ENCODE measurements at regions of chr11 and their contacts with region 1.

Region 1: GRCh38 chr11:62787005-62787759 is at the start of gene TMEM179B:
- DNase-seq: peak; percentile 87 to 98 (median 95)
- ATAC-seq: peak; percentile 83
- H3K4me3 ChIP-seq: peak within 1 kb of the TSS; percentile 82
- H3K4me3 Mint-ChIP-seq: peak within 1 kb of the TSS; percentile 93 to 97 (median 96)
- H3K27ac ChIP-seq: peak within 1 kb of the TSS; percentile 93
- H3K27ac Mint-ChIP-seq: peak within 1 kb of the TSS; percentile 91 to 99 (median 96)
- H3K4me1 ChIP-seq: peaks cover 32 to 38% of the 10 kb centered on the region in 2 donors
- H3K4me1 Mint-ChIP-seq: peaks cover 22 to 59% (median 42%) of the 10 kb centered on the region in 7 donors
- H3K27me3 ChIP-seq: no peaks in the 10 kb centered on the region
- H3K27me3 Mint-ChIP-seq: no peaks in the 10 kb centered on the region
- total RNA-seq, gene TMEM179B: 23.2 to 72.3 (median 50.9) TPM

Region 2: GRCh38 chr11:62186195-62186594 is 601.0 kb before region 1 on chr11:
- CTCF ChIA-PET with region 1: no interaction called
- POLR2A ChIA-PET with region 1: no interaction called
- intact Hi-C with region 1: no loop called
- DNase-seq: no peak
- ATAC-seq: no peak
- H3K4me3 ChIP-seq: no peak overlapping the region
- H3K4me3 Mint-ChIP-seq: no peak overlapping the region
- H3K27ac ChIP-seq: no peak overlapping the region
- H3K27ac Mint-ChIP-seq: no peak overlapping the region
- H3K4me1 ChIP-seq: no peaks in the 10 kb centered on the region
- H3K4me1 Mint-ChIP-seq: no peaks in the 10 kb centered on the region
- H3K27me3 ChIP-seq: no peaks in the 10 kb centered on the region
- H3K27me3 Mint-ChIP-seq: peaks cover 33 to 40% (median 33%) of the 10 kb centered on the region in 5 donors

Region 3: DNA sequence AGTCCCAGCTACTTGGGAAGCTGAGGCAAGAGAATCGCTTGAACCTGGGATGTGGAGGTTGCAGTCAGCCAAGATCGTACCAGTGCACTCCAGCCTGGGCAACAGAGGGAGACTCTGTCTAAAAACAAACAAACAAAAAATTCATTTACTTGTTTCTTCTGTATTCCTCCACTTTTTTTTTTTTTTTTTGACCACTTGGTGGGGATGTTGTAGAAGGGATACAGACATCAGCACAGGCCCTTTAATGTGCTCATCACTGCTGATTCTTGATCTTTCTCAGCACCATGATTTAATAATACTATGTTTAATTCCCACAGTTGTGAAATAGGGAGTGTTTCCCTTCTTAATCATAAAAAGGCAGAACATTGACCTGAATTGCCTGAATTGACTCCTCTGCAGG is 54.4 kb before region 1 on chr11:
- CTCF ChIA-PET with region 1: interaction called, 17 read pairs
- POLR2A ChIA-PET with region 1: interaction called, 41 read pairs
- intact Hi-C with region 1: loop called (anchors 1 kb)
- DNase-seq: peak in 2 of 9 donors; percentile 33 to 40
- ATAC-seq: no peak
- H3K4me3 ChIP-seq: no peak overlapping the region
- H3K4me3 Mint-ChIP-seq: peak overlapping the region in 3 of 10 donors; percentile 23 to 37 (median 29)
- H3K27ac ChIP-seq: no peak overlapping the region
- H3K27ac Mint-ChIP-seq: peak overlapping the region in 4 of 9 donors; percentile 39 to 60 (median 46)
- H3K4me1 ChIP-seq: peaks cover 11 to 26% of the 10 kb centered on the region in 2 donors
- H3K4me1 Mint-ChIP-seq: peaks cover 0 to 32% (median 27%) of the 10 kb centered on the region in 7 donors
- H3K27me3 ChIP-seq: no peaks in the 10 kb centered on the region
- H3K27me3 Mint-ChIP-seq: no peaks in the 10 kb centered on the region

Region 4: DNA sequence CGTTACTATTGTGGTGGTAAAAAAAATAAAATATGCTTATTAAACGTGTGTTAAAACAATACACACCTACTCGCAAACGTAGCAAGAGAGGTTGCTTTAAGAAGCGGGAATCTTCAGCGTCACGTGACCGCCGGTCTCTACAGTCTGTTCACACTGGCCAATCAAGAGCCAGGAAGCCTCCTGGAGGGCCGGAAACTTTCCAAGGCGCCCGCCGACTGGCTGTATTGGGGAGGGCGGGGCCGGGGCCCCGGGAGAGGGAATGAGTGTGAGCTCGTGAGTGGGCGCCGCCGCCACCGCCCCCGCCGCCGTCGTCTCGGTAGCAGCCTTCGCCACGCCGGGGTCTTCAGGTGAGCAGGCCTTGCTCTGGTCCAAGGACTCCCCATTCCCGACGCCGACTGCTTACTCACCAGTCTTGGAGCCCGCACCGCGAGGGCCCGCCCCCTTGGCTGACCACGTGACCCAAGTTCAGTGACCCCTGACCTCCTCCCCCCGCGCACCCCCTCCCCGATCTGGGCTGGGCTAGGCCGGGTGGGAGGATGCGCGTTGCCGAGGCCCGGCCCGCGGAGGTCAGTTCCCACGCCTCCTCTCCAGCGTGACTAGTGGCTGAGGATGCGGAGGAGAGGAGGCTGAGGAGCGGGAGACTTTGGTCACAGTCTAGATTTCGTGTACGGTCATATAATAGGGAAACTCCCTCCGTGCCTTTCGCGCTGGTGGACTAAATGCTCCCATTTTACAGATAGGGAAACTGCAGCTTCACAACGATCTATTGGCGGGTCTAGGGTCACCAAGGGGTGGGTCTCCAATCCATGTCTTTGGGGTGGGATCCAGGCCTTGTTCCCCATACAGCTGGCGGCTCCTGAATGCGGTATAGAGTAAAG is 15.8 kb before region 1 on chr11 and contains the start of gene TAF6L:
- CTCF ChIA-PET with region 1: interaction called, 10 read pairs
- POLR2A ChIA-PET with region 1: interaction called, 43 read pairs
- intact Hi-C with region 1: loop called (anchors 1 kb)
- DNase-seq: peak; percentile 80 to 98 (median 82)
- ATAC-seq: peak; percentile 92
- H3K4me3 ChIP-seq: peak within 1 kb of the TSS; percentile 66
- H3K4me3 Mint-ChIP-seq: peak within 1 kb of the TSS; percentile 88 to 98 (median 94)
- H3K27ac ChIP-seq: peak within 1 kb of the TSS; percentile 82
- H3K27ac Mint-ChIP-seq: peak within 1 kb of the TSS; percentile 89 to 97 (median 94)
- H3K4me1 ChIP-seq: peaks cover 10 to 13% of the 10 kb centered on the region in 2 donors
- H3K4me1 Mint-ChIP-seq: peaks cover 17 to 37% (median 27%) of the 10 kb centered on the region in 7 donors
- H3K27me3 ChIP-seq: no peaks in the 10 kb centered on the region
- H3K27me3 Mint-ChIP-seq: no peaks in the 10 kb centered on the region
- total RNA-seq, gene TAF6L: 13.1 to 34.9 (median 24.1) TPM

Region 5: GRCh38 chr11:62816557-62816956 is 29.4 kb after region 1 on chr11:
- CTCF ChIA-PET with region 1: interaction called, 5 read pairs
- POLR2A ChIA-PET with region 1: interaction called, 10 read pairs
- intact Hi-C with region 1: no loop called
- DNase-seq: no peak
- ATAC-seq: peak; percentile 77
- H3K4me3 ChIP-seq: no peak overlapping the region
- H3K4me3 Mint-ChIP-seq: no peak overlapping the region
- H3K27ac ChIP-seq: no peak overlapping the region
- H3K27ac Mint-ChIP-seq: peak overlapping the region in 1 of 9 donors; percentile 8
- H3K4me1 ChIP-seq: no peaks in the 10 kb centered on the region
- H3K4me1 Mint-ChIP-seq: peaks cover 0 to 9% (median 0%) of the 10 kb centered on the region in 7 donors
- H3K27me3 ChIP-seq: no peaks in the 10 kb centered on the region
- H3K27me3 Mint-ChIP-seq: no peaks in the 10 kb centered on the region

Region 6: DNA sequence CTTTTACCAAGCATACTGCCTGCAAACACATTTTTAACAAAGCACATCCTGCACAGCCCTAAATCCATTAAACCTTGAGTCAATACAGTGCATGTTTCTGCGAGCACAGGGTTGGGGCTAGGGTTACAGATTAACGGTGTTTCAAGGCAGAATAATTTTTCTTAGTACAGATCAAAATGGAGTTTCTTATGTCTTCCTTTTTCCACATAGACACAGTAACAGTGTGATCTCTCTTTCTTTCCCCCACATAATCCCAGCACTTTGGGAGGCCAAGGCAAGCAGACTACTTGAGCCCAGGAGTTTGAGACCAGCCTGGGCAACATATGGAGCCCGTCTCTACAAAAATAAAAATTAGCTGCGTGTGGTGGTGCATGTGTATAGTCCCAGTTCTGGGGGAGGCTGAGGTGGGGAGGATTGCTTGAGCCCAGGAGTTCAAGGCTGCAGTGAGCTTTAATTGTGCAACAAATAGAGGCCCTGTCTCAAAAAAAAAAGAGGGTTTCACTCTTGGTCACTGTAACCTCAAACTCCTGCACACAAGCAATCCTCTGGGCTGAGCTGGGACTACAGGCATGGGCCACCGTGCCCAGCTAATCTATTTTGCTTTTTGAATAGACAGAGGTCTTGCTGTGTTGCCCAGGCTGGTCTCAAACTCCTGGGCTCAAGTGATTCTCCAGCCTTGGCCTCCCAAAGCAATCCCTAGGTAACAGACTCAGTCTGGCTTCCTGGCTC is 73.8 kb after region 1 on chr11:
- CTCF ChIA-PET with region 1: interaction called, 34 read pairs
- POLR2A ChIA-PET with region 1: interaction called, 164 read pairs
- intact Hi-C with region 1: loop called (anchors 1 kb)
- DNase-seq: no peak
- ATAC-seq: no peak
- H3K4me3 ChIP-seq: no peak overlapping the region
- H3K4me3 Mint-ChIP-seq: no peak overlapping the region
- H3K27ac ChIP-seq: no peak overlapping the region
- H3K27ac Mint-ChIP-seq: peak overlapping the region in 2 of 9 donors; percentile 58 to 59
- H3K4me1 ChIP-seq: peaks cover 5 to 8% of the 10 kb centered on the region in 2 donors
- H3K4me1 Mint-ChIP-seq: peaks cover 7 to 54% (median 17%) of the 10 kb centered on the region in 7 donors
- H3K27me3 ChIP-seq: no peaks in the 10 kb centered on the region
- H3K27me3 Mint-ChIP-seq: peaks cover 0 to under 1% (median 0%) of the 10 kb centered on the region in 5 donors

Measured in naive thymus-derived CD4-positive, alpha-beta T cell (primary cell).